A673 (cell line): ENCODE measurements at regions of chr12 and their contacts with region 1.

Region 1: DNA sequence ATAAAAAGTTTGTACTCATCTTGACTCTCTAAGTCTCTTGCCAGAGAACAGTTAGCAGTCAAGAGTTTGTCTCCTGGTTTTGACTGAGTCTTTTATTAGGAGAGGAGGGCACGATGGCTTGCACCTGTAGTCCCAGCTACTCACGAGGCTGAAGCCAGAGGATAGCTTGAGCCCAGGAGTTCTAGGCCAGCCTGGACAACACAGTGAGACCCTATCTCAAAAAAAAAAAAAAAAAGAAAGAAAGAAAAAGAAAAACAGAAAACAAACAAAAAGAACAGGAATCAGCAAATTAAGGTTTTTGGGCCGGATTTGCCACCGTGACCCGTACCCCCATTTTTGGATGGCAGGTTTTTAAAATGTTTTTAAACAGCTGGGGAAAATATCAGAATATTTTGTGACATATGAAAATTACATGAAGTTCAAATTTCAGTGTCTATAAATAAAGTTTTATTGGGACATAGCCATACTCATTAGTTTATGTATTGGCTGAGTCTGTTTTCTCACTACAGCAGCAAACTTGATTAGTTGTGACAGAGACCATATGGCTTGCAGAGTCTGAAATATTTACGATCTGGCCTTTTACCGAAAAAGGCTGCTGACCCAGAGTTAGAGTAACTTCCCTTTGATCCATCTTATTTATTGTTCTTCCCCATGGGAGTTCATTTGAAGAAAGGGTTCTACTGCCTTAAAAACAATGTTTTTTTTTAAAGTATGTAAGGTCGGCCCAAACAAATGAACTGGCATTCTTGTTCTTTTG is 31.2 kb downstream of the VEZT start:
- DNase-seq: peak; percentile 54
- H3K4me3 ChIP-seq: no peak overlapping the region
- H3K27ac ChIP-seq: peak overlapping the region; percentile 23
- H3K4me1 ChIP-seq: peaks cover 51% of the 10 kb centered on the region
- H3K27me3 ChIP-seq: no peaks in the 10 kb centered on the region
- CTCF ChIP-seq: no peak

Region 2: DNA sequence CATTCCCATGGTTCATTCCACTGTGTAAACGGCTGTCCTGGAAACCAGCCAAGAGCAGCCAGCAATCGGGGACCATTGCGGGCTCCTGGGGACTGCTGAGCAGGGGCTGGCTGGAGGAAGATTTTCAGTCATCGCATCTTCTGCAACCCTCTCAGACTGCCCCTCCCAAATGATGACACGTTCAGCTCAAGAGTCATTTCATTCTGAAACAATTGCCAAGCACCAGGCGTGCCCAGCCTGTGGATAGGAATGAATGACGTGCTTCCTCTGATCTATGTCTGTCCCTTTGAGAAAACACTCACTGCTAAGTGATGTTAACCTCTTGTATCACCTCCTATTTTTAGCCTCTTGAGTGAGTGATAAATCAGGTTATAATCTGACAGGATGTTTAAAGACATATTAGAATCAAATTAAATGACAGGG is 307.3 kb before region 1 on chr12:
- CTCF ChIA-PET with region 1: no interaction called
- POLR2A ChIA-PET with region 1: no interaction called
- intact Hi-C with region 1: no loop called
- DNase-seq: peak; percentile 49
- H3K4me3 ChIP-seq: no peak overlapping the region
- H3K27ac ChIP-seq: no peak overlapping the region
- H3K4me1 ChIP-seq: no peaks in the 10 kb centered on the region
- H3K27me3 ChIP-seq: no peaks in the 10 kb centered on the region
- CTCF ChIP-seq: no peak

Region 3: DNA sequence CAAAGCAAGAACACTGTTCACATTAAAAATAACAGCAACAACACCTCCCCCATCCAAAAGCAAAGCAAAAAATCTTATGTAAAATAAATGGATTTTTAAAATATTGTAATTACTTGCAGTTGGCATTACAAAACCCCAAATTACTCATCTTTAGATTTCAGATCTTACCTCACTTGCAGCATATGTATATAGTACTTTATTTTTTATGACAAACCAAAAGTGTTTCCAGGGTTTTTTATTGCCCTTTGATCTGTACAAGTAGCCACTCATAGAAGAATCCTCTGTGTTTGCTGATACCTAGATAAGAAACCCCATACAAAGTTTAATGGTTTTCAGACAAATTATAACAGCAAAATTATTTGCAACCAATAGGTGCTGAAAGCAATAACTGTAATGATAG is 163.2 kb before region 1 on chr12:
- CTCF ChIA-PET with region 1: no interaction called
- POLR2A ChIA-PET with region 1: interaction called, 12 read pairs
- intact Hi-C with region 1: no loop called
- DNase-seq: no peak
- H3K4me3 ChIP-seq: no peak overlapping the region
- H3K27ac ChIP-seq: no peak overlapping the region
- H3K4me1 ChIP-seq: no peaks in the 10 kb centered on the region
- H3K27me3 ChIP-seq: no peaks in the 10 kb centered on the region
- CTCF ChIP-seq: no peak

Region 4: GRCh38 chr12:95182868-95183415 is 65.8 kb before region 1 on chr12:
- CTCF ChIA-PET with region 1: no interaction called
- POLR2A ChIA-PET with region 1: no interaction called
- intact Hi-C with region 1: no loop called
- DNase-seq: no peak
- H3K4me3 ChIP-seq: no peak overlapping the region
- H3K27ac ChIP-seq: no peak overlapping the region
- H3K4me1 ChIP-seq: no peaks in the 10 kb centered on the region
- H3K27me3 ChIP-seq: no peaks in the 10 kb centered on the region
- CTCF ChIP-seq: no peak